ENCODE measurements at regions of chr9 and their contacts with region 1.

Region 1: GRCh38 chr9:119968836-119969707 is 599.8 kb upstream of the BRINP1 start:
- DNase-seq: peak; percentile 35 to 55
- ATAC-seq: peak; percentile 64 to 81
- H3K4me3 ChIP-seq: no peak overlapping the region
- H3K27ac ChIP-seq: no peak overlapping the region
- H3K4me1 ChIP-seq: no peaks in the 10 kb centered on the region
- H3K27me3 ChIP-seq: no peaks in the 10 kb centered on the region
- CTCF ChIP-seq: peak; percentile 56 to 88 (median 76)
- POLR2A ChIP-seq: no peak

Region 2: GRCh38 chr9:119556129-119556875 is 412.8 kb before region 1 on chr9:
- in situ Hi-C with region 1: loop called (anchors 10 to 25 kb)
- intact Hi-C with region 1: loop called (anchors 5 kb)
- DNase-seq: peak; percentile 6 to 37
- ATAC-seq: peak; percentile 58 to 86
- H3K4me3 ChIP-seq: peak overlapping the region; percentile 7 to 48 (median 31)
- H3K27ac ChIP-seq: no peak overlapping the region
- H3K4me1 ChIP-seq: no peaks in the 10 kb centered on the region
- H3K27me3 ChIP-seq: no peaks in the 10 kb centered on the region
- CTCF ChIP-seq: peak; percentile 71 to 85 (median 79)
- POLR2A ChIP-seq: no peak

Region 3: GRCh38 chr9:119836036-119836435 is 133.0 kb before region 1 on chr9:
- in situ Hi-C with region 1: no loop called
- intact Hi-C with region 1: no loop called
- DNase-seq: no peak
- ATAC-seq: no peak
- H3K4me3 ChIP-seq: no peak overlapping the region
- H3K27ac ChIP-seq: no peak overlapping the region
- H3K4me1 ChIP-seq: no peaks in the 10 kb centered on the region
- H3K27me3 ChIP-seq: no peaks in the 10 kb centered on the region
- CTCF ChIP-seq: no peak
- POLR2A ChIP-seq: no peak

Region 4: GRCh38 chr9:119868694-119869093 is 100.4 kb before region 1 on chr9:
- in situ Hi-C with region 1: loop called in 1 of 4 experiments (anchors 25 kb)
- intact Hi-C with region 1: no loop called
- DNase-seq: no peak
- ATAC-seq: no peak
- H3K4me3 ChIP-seq: no peak overlapping the region
- H3K27ac ChIP-seq: no peak overlapping the region
- H3K4me1 ChIP-seq: no peaks in the 10 kb centered on the region
- H3K27me3 ChIP-seq: no peaks in the 10 kb centered on the region
- CTCF ChIP-seq: no peak
- POLR2A ChIP-seq: no peak

Region 5: DNA sequence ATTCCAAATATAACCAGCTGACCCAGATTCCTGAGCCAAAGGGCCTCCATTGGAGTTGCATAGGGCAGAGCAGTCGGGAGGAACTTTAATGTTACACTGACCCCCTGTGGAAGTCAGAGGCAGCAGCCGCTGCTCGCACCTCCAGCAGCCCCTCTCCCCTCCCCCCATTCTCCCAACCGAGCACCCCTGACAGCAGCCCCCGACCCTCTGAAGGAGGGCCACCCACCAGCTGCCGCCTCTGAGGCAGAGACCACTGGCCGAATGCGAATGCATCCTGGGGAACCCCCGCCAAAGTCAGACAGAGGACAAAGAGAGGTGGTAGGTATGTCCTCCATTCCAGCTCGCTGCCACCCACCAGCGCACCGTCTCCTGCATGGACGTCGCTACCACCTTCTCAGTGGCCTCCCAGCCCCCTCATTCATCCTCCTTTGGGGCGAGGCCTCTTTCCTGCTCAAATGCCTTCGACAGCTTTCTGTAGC is 379.9 kb after region 1 on chr9:
- in situ Hi-C with region 1: loop called in 1 of 4 experiments (anchors 25 kb)
- intact Hi-C with region 1: no loop called
- DNase-seq: no peak
- ATAC-seq: peak; percentile 42 to 68
- H3K4me3 ChIP-seq: no peak overlapping the region
- H3K27ac ChIP-seq: no peak overlapping the region
- H3K4me1 ChIP-seq: no peaks in the 10 kb centered on the region
- H3K27me3 ChIP-seq: no peaks in the 10 kb centered on the region
- CTCF ChIP-seq: peak; percentile 37 to 69 (median 55)
- POLR2A ChIP-seq: no peak